ENCODE measurements at regions of chr19 and their contacts with region 1.

Region 1: DNA sequence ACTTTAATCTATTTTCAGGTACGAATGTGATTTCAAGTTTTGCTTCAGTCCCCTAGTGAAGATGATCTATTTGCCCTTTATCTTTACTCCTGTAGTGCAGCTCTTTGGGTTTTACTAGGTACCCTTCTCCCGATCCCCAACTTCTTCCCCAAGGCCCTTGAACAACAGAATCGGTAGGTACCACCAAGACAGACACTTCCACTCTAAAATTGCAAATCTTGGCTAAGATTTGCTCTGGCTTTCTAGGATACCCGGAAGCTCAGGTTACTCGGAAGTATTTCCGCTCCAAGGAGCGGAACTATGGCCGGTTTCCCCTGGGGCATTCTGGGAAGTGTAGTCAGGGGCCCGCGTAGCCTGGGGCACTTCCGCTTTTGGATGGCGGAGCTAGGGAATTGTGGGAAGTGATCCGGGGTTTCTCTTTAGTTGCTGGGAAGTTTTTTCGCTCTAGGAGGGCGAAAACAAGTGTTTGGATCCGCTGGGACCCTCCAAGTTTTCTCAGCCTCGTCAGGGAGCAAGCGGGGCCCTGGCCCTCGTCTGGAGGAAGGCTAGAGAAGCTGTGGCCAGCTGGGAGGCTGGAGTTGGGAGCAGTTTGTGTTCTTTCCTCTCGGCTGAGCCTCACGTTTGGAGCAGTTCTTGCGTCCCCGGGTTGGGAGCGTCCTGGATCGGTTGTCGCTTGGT is 5.1 kb upstream of the ZNF227 start:
- DNase-seq: peak; percentile 75 to 84
- ATAC-seq: peak; percentile 91 to 92
- H3K4me3 ChIP-seq: peak overlapping the region; percentile 58 to 88 (median 78)
- H3K27ac ChIP-seq: peak overlapping the region; percentile 79 to 87 (median 82)
- H3K4me1 ChIP-seq: peaks cover 4 to 7% of the 10 kb centered on the region in 2 donors
- H3K27me3 ChIP-seq: no peaks in the 10 kb centered on the region
- CTCF ChIP-seq: no peak
- POLR2A ChIP-seq: peak in 1 of 2 donors; percentile 28

Region 2: DNA sequence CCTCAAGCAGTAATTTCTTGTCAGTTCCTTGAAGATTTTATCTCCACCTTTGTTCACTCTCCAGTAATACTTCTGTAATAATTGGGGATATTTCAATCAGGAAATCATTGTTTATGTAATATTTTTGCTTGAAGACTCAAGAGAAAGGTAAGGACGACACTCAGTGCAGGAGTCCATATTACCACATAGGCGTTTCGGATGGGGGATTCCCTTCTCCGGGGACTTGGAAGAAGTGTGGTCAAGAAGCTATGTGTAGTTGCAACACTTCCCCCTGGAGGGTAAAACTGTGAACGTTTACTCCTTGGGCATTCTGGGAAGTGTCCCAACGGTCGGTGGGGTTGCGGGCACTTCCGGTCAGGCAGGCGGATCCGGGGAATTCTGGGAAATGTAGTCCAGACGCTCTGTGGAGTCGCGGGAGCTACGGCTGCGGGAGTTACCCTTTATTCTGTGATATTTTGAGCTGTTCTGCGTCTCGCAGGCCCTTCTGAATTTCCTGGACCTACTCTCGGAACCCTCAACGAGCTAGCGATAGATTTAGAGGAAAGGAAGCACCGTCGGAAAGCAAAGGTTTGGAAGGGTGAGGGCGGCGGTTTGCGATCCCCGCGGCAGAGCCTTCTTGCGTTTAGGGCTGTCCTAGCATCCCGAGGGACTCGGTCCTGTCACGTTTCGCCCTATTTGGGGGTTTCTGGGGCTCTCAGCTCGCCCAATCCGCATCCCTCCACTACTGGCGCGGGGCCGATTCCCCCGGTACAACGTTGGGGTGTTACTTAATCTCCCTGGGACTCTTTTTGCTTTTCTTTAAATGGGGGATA is 256.2 kb before region 1 on chr19 and contains the start of gene ZNF221:
- in situ Hi-C with region 1: no loop called
- intact Hi-C with region 1: loop called (anchors 1 kb)
- DNase-seq: peak; percentile 87 to 90
- ATAC-seq: peak; percentile 100
- H3K4me3 ChIP-seq: peak within 1 kb of the TSS; percentile 70 to 97 (median 84)
- H3K27ac ChIP-seq: peak within 1 kb of the TSS; percentile 66 to 80 (median 74)
- H3K4me1 ChIP-seq: peaks cover 0 to 3% of the 10 kb centered on the region in 2 donors
- H3K27me3 ChIP-seq: no peaks in the 10 kb centered on the region
- CTCF ChIP-seq: peak in 4 of 5 experiments; percentile 19 to 48 (median 38)
- POLR2A ChIP-seq: no peak
- total RNA-seq, gene ZNF221: 0.76 to 15.3 (median 0.96) TPM

Region 3: DNA sequence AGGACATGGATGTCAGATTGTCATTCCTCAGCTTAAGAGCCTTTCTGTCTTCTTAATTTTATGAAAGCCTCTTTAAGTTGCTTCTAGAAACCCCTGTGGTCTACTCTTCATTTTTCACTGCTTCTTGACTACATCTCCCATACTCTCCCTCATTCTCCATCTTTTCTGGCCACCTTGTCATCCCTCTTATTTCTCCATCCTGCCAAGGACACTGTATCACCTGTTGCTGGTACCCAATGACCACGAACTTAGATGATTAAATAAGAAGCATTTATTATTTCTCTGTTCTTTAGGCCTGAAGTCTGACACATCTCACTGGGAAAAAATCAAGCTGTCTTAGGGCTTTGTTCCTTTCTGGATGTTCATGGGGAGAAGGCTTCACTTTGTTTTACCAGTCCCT is 146.2 kb before region 1 on chr19:
- in situ Hi-C with region 1: no loop called
- intact Hi-C with region 1: no loop called
- DNase-seq: no peak
- ATAC-seq: no peak
- H3K4me3 ChIP-seq: no peak overlapping the region
- H3K27ac ChIP-seq: no peak overlapping the region
- H3K4me1 ChIP-seq: no peaks in the 10 kb centered on the region
- H3K27me3 ChIP-seq: no peaks in the 10 kb centered on the region
- CTCF ChIP-seq: no peak
- POLR2A ChIP-seq: no peak

Region 4: GRCh38 chr19:44500148-44500956 is 293.1 kb after region 1 on chr19 and contains the start of gene ZNF180:
- in situ Hi-C with region 1: no loop called
- intact Hi-C with region 1: loop called (anchors 1 kb)
- DNase-seq: peak; percentile 87 to 89
- ATAC-seq: peak; percentile 99
- H3K4me3 ChIP-seq: peak within 1 kb of the TSS; percentile 77 to 99 (median 88)
- H3K27ac ChIP-seq: peak within 1 kb of the TSS; percentile 75 to 90 (median 82)
- H3K4me1 ChIP-seq: peaks cover 12 to 17% of the 10 kb centered on the region in 2 donors
- H3K27me3 ChIP-seq: no peaks in the 10 kb centered on the region
- CTCF ChIP-seq: peak; percentile 73 to 83 (median 80)
- POLR2A ChIP-seq: peak; percentile 58 to 64
- total RNA-seq, gene ZNF180: 2.1 to 17.4 (median 5.1) TPM

Measured in gastrocnemius medialis (tissue), 4 donors.